ENCODE measurements at regions of chr17 and their contacts with region 1.

Region 1: DNA sequence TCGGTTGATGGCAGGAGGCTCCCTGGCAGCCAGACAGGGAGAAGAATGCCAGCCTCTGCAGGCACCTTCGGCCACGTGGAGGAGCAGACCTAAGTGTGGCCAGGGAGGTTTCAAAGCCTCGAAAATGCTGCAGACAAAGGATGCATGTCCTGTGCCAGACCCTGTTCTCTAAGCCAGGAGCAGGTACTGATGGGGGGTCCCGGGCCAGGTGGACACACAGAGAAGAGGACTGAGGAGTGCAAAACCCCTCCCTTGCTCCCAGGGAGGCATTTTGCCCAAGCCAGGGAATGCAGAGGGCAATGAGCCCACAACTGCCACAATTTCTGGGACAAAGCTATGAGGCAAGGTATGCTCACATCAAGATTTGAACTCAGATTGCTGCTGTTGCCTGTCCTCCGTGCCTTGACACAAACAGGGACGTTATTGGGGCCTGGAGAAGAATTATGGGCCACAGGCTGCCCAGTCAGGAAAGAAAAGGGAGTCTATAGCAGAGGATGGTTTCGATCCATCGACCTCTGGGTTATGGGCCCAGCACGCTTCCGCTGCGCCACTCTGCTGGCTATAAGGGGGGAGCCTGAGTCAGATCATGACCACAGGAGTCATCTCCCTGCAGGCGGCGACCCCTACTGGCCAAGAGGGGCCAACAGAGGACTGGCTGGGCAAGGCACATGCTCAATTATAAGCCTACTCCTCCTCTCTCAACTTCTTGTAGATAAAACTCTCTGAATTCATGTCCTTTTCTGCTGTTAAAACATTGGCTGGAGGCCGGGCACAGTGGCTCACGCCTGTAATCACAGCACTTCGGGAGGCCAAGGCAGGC is 25.1 kb upstream of the FOXK2 start:
- DNase-seq: peak; percentile 84 to 90
- H3K4me3 ChIP-seq: no peak overlapping the region
- H3K27ac ChIP-seq: peak overlapping the region; percentile 43
- H3K4me1 ChIP-seq: peaks cover 13% of the 10 kb centered on the region
- H3K27me3 ChIP-seq: no peaks in the 10 kb centered on the region
- CTCF ChIP-seq: peak; percentile 79

Region 2: GRCh38 chr17:82230627-82231311 is 263.7 kb before region 1 on chr17:
- CTCF ChIA-PET with region 1: no interaction called
- POLR2A ChIA-PET with region 1: no interaction called
- intact Hi-C with region 1: loop called (anchors 10 kb)
- DNase-seq: peak in 1 of 2 experiments; percentile 85
- H3K4me3 ChIP-seq: peak overlapping the region; percentile 72
- H3K27ac ChIP-seq: peak overlapping the region; percentile 32; the same call in 1 of the 2 replicates
- H3K4me1 ChIP-seq: peaks cover 40% of the 10 kb centered on the region
- H3K27me3 ChIP-seq: no peaks in the 10 kb centered on the region
- CTCF ChIP-seq: peak; percentile 46

Region 3: DNA sequence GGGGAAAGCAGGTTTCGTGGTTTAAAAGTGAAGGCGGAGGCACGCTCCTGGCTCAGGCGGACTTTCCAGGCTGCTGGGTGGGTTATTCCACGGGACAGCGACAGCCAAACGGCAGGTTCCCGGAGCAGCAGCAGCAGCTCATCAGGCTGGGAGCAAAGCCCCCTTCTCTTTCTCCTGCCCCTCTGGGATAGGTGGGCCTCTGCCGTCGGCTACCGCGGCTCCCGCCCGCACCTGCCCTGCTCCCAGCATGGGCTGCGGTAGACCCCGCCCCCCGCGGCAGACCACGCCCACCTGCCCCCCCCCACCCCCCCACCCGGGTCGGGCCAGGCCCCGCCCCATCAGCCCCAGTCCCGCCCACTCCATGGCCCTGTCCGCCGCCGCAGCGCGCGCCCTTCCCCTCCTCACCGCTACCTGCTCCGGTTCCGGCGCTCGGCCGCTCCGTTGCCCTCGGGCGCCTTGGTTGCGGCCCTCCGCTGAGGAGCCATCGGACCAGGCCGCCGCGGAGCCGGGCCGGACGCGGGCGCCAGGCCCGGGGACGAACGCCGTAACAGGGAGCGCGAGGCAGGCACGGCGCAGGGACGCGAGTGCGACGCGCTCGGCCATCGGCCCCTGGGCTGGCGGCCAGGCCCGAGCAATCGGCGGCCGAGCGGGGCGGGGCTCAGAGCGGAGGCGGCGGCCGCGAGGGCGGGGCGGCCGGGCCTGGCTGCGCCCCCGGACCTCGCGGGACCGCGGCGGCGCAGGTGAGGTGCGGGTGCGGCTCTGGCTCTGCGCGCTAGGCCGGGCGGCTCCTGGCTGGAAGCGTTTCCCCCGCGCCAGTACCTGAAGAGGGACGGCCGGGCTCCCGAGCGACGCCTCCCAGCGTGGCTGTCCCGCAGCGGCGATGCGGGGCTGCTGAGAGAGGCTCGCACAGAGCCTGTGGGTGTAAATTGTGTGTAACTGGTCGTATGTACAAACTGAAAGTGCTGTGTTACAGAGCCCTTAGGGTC is 76.2 kb before region 1 on chr17 and contains the starts of genes HEXD and OGFOD3:
- CTCF ChIA-PET with region 1: no interaction called
- POLR2A ChIA-PET with region 1: no interaction called
- intact Hi-C with region 1: no loop called
- DNase-seq: peak; percentile 56 to 91
- H3K4me3 ChIP-seq: peak within 1 kb of the TSS; percentile 81
- H3K27ac ChIP-seq: no peak within 1 kb of the TSS
- H3K4me1 ChIP-seq: peaks cover 9% of the 10 kb centered on the region
- H3K27me3 ChIP-seq: no peaks in the 10 kb centered on the region
- CTCF ChIP-seq: no peak
- total RNA-seq, gene HEXD: 30.0 and 35.9 TPM in 2 replicates
- total RNA-seq, gene OGFOD3: 26.6 and 32.9 TPM in 2 replicates

Region 4: GRCh38 chr17:82457997-82458864 is 36.2 kb before region 1 on chr17 and contains the start of gene NARF:
- CTCF ChIA-PET with region 1: interaction called, 4 read pairs
- POLR2A ChIA-PET with region 1: no interaction called
- intact Hi-C with region 1: loop called (anchors 2 kb)
- DNase-seq: peak; percentile 90 to 95
- H3K4me3 ChIP-seq: peak within 1 kb of the TSS; percentile 71
- H3K27ac ChIP-seq: peak within 1 kb of the TSS; percentile 95
- H3K4me1 ChIP-seq: peaks cover 25% of the 10 kb centered on the region
- H3K27me3 ChIP-seq: no peaks in the 10 kb centered on the region
- CTCF ChIP-seq: no peak
- total RNA-seq, gene NARF: 57.2 and 58.0 TPM in 2 replicates

Region 5: DNA sequence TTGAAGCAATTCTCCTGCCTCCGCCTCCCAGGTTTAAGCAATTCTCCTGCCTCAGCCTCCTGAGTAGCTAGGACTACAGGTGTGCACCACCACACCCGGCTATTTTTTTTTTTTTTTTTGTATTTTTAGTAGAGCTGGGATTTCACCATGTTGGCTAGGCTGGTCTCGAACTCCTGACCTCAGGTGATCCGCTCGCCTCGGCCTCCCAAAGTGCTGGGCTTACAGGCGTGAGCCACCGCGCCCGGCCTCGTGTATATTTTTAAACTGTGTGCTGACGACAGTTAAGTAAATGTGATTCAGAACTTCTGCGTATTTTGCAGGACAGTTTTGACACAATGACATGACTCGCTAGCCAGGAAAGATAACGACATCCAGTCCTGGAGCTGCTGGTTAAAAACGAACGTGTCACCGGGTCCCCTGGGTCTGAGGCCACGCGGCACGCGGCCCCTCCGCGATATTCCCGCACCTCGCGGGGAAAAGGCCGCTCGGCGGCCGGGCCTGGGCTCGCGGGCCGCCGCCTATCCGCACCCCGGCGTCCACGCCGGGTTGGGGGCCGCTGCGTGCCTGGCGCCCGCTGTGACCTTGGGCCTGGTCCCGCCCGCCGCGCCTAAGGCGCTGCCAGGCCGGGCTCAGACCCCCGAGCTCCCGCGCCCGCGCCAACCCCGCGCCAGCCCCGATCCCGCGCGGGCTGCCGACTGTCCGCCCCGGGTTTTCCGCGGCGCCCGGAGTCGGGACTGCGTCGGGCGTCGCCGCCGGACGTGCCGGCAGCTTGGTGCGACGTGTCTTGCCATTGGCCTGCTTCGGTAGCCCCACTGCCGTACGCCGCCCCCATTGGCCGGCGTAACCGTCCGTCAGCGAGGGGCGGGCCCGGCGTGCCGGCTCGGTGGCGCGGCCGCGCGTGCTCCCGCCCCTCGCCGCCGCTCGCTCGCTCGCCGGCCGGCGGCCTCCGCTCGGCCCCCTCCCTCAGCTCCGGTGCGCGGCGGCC is 24.7 kb after region 1 on chr17 and contains the start of gene FOXK2:
- CTCF ChIA-PET with region 1: interaction called, 3 read pairs
- POLR2A ChIA-PET with region 1: no interaction called
- intact Hi-C with region 1: loop called (anchors 1 kb)
- DNase-seq: peak; percentile 78 to 96
- H3K4me3 ChIP-seq: peak within 1 kb of the TSS; percentile 79
- H3K27ac ChIP-seq: peak within 1 kb of the TSS; percentile 84
- H3K4me1 ChIP-seq: peaks cover 18% of the 10 kb centered on the region
- H3K27me3 ChIP-seq: no peaks in the 10 kb centered on the region
- CTCF ChIP-seq: no peak
- total RNA-seq, gene FOXK2: 70.5 and 78.9 TPM in 2 replicates

Region 6: GRCh38 chr17:82551779-82552457 is 57.5 kb after region 1 on chr17:
- CTCF ChIA-PET with region 1: interaction called, 7 read pairs
- POLR2A ChIA-PET with region 1: interaction called, 7 read pairs
- intact Hi-C with region 1: loop called (anchors 5 kb)
- DNase-seq: peak; percentile 46 to 76
- H3K4me3 ChIP-seq: no peak overlapping the region
- H3K27ac ChIP-seq: no peak overlapping the region
- H3K4me1 ChIP-seq: no peaks in the 10 kb centered on the region
- H3K27me3 ChIP-seq: no peaks in the 10 kb centered on the region
- CTCF ChIP-seq: peak; percentile 71